Naive thymus-derived CD4-positive, alpha-beta T cell (primary cell): ENCODE measurements at regions of chr3 and their contacts with region 1.

Region 1: GRCh38 chr3:71064288-71064955 is 519.1 kb downstream of the FOXP1 start:
- DNase-seq: peak in 8 of 9 donors; percentile 35 to 86 (median 84)
- ATAC-seq: peak; percentile 64
- H3K4me3 ChIP-seq: peak overlapping the region; percentile 74
- H3K4me3 Mint-ChIP-seq: no peak overlapping the region
- H3K27ac ChIP-seq: peak overlapping the region; percentile 82
- H3K27ac Mint-ChIP-seq: no peak overlapping the region
- H3K4me1 ChIP-seq: peaks cover 55 to 64% of the 10 kb centered on the region in 2 donors
- H3K4me1 Mint-ChIP-seq: peaks cover 47 to 69% (median 67%) of the 10 kb centered on the region in 7 donors
- H3K27me3 ChIP-seq: no peaks in the 10 kb centered on the region
- H3K27me3 Mint-ChIP-seq: no peaks in the 10 kb centered on the region

Region 2: DNA sequence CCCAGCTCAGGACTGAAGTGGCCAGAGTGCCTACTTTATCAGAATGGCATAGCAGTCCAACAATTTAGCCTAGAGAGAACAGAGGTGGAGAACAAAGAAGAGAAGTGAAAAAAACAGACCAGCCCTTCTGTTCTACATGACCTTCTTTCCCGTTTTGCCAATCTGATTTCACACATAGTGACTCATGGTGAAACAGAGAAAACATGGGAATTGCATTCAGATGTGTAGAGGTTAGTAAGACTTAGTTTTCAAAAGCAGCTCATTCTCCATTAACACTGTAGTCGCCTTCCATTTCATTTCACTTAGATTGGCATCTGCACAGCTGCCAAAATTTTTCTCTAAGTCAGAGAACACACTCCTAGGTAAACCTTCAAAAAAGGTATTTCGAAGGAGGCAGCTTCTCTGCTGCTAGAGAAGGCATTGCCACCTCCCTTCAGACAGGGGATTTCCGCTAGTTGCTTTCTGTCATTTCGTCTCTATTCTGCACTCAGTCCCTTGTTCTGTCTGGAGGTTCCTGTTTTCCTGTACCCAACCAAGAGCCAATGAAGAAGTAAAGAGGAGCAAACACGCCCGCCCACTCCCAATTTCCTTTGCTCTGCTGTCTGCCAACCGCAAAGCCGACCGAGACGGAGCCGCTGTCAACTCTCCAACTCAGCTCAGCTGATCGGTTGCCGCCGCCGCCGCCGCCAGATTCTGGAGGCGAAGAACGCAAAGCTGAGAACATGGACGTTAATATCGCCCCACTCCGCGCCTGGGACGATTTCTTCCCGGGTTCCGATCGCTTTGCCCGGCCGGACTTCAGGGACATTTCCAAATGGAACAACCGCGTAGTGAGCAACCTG is 1979.9 kb before region 1 on chr3 and contains the start of gene ARL6IP5:
- CTCF ChIA-PET with region 1: no interaction called
- POLR2A ChIA-PET with region 1: no interaction called
- intact Hi-C with region 1: loop called in 1 of 2 experiments (anchors 10 kb)
- DNase-seq: peak; percentile 71 to 95 (median 93)
- ATAC-seq: peak; percentile 84
- H3K4me3 ChIP-seq: peak within 1 kb of the TSS; percentile 89
- H3K4me3 Mint-ChIP-seq: peak within 1 kb of the TSS; percentile 88 to 99 (median 97)
- H3K27ac ChIP-seq: peak within 1 kb of the TSS; percentile 76
- H3K27ac Mint-ChIP-seq: peak within 1 kb of the TSS; percentile 92 to 99 (median 98)
- H3K4me1 ChIP-seq: peaks cover 58% of the 10 kb centered on the region in 2 donors
- H3K4me1 Mint-ChIP-seq: peaks cover 44 to 72% (median 62%) of the 10 kb centered on the region in 7 donors
- H3K27me3 ChIP-seq: no peaks in the 10 kb centered on the region
- H3K27me3 Mint-ChIP-seq: no peaks in the 10 kb centered on the region
- total RNA-seq, gene ARL6IP5: 75.8 to 226 (median 119) TPM

Region 3: GRCh38 chr3:71022551-71023335 is 41.7 kb before region 1 on chr3:
- CTCF ChIA-PET with region 1: no interaction called
- POLR2A ChIA-PET with region 1: interaction called, 3 read pairs
- intact Hi-C with region 1: loop called in 1 of 2 experiments (anchors 5 kb)
- DNase-seq: no peak
- ATAC-seq: no peak
- H3K4me3 ChIP-seq: no peak overlapping the region
- H3K4me3 Mint-ChIP-seq: peak overlapping the region in 2 of 10 donors; percentile 6 to 32
- H3K27ac ChIP-seq: no peak overlapping the region
- H3K27ac Mint-ChIP-seq: peak overlapping the region in 8 of 9 donors; percentile 12 to 85 (median 72)
- H3K4me1 ChIP-seq: peaks cover 0 to 43% of the 10 kb centered on the region in 2 donors
- H3K4me1 Mint-ChIP-seq: peaks cover 37 to 94% (median 85%) of the 10 kb centered on the region in 7 donors
- H3K27me3 ChIP-seq: no peaks in the 10 kb centered on the region
- H3K27me3 Mint-ChIP-seq: no peaks in the 10 kb centered on the region

Region 4: GRCh38 chr3:71050538-71051258 is 13.7 kb before region 1 on chr3:
- CTCF ChIA-PET with region 1: interaction called, 4 read pairs
- POLR2A ChIA-PET with region 1: interaction called, 48 read pairs
- intact Hi-C with region 1: loop called (anchors 1 kb)
- DNase-seq: peak in 7 of 9 donors; percentile 52 to 82 (median 75)
- ATAC-seq: peak; percentile 97
- H3K4me3 ChIP-seq: no peak overlapping the region
- H3K4me3 Mint-ChIP-seq: peak overlapping the region in 8 of 10 donors; percentile 45 to 83 (median 64)
- H3K27ac ChIP-seq: peak overlapping the region; percentile 71
- H3K27ac Mint-ChIP-seq: peak overlapping the region in 6 of 9 donors; percentile 78 to 99 (median 95)
- H3K4me1 ChIP-seq: peaks cover 24 to 98% of the 10 kb centered on the region in 2 donors
- H3K4me1 Mint-ChIP-seq: peaks cover 73 to 100% (median 100%) of the 10 kb centered on the region in 7 donors
- H3K27me3 ChIP-seq: no peaks in the 10 kb centered on the region
- H3K27me3 Mint-ChIP-seq: no peaks in the 10 kb centered on the region

Region 5: DNA sequence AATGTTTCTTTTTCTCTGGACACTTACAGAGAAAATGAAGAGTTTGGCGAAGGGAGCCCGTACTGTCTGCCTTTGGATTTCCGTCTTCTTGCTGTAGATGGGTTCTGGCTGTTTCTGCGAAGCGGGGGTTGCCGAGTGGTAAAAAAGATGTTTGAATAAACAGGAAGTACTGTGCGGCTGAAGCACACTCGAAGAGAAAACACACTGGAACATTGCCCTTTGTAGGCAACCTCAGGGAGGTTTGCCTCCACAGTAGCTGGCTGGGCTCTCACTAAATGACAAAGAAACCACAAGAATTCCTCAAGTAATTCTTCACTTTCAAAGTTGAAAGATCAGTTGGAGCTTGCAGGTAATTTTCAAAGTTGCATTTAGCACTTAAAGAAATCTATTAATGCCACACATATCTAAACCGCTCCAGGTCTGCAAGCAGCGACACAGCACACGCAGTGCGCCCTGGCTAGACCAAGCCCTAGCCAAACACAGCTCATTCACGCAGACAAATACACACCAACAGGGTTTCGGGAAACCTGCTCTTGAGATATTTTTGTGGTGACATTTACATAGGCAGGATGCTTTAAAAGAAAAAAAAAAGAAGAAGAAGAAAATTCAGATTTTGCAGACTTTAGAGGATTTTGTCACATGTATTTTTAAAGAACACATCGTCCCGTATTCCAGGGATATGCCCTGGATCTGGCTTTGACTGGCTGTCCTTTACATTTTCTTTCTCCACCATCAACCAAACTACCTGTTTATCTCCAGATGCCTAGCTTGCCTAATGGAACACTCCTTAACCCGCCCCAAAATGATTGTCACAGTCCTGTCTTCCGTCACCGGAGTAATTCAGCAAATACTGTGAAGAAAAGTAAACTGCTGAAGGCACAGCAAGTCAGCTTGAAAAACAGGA is 66.3 kb after region 1 on chr3:
- CTCF ChIA-PET with region 1: interaction called, 8 read pairs
- POLR2A ChIA-PET with region 1: interaction called, 34 read pairs
- intact Hi-C with region 1: loop called (anchors 1 kb)
- DNase-seq: peak; percentile 33 to 90 (median 85)
- ATAC-seq: peak; percentile 86
- H3K4me3 ChIP-seq: peak overlapping the region; percentile 71
- H3K4me3 Mint-ChIP-seq: peak overlapping the region; percentile 85 to 99 (median 93)
- H3K27ac ChIP-seq: peak overlapping the region; percentile 89
- H3K27ac Mint-ChIP-seq: peak overlapping the region; percentile 94 to 99 (median 97)
- H3K4me1 ChIP-seq: peaks cover 42 to 51% of the 10 kb centered on the region in 2 donors
- H3K4me1 Mint-ChIP-seq: peaks cover 49 to 85% (median 80%) of the 10 kb centered on the region in 7 donors
- H3K27me3 ChIP-seq: no peaks in the 10 kb centered on the region
- H3K27me3 Mint-ChIP-seq: no peaks in the 10 kb centered on the region

Region 6: GRCh38 chr3:71369701-71370391 is 305.4 kb after region 1 on chr3:
- CTCF ChIA-PET with region 1: no interaction called
- POLR2A ChIA-PET with region 1: no interaction called
- intact Hi-C with region 1: loop called in 1 of 2 experiments (anchors 2 kb)
- DNase-seq: no peak
- ATAC-seq: no peak
- H3K4me3 ChIP-seq: no peak overlapping the region
- H3K4me3 Mint-ChIP-seq: peak overlapping the region in 2 of 10 donors; percentile 12 to 73
- H3K27ac ChIP-seq: peak overlapping the region; percentile 88
- H3K27ac Mint-ChIP-seq: peak overlapping the region in 8 of 9 donors; percentile 88 to 100 (median 96)
- H3K4me1 ChIP-seq: peaks cover 19 to 78% of the 10 kb centered on the region in 2 donors
- H3K4me1 Mint-ChIP-seq: peaks cover 10 to 94% (median 89%) of the 10 kb centered on the region in 7 donors
- H3K27me3 ChIP-seq: no peaks in the 10 kb centered on the region
- H3K27me3 Mint-ChIP-seq: peaks cover 0 to 39% (median 0%) of the 10 kb centered on the region in 5 donors

Region 7: GRCh38 chr3:71495708-71496472 is 431.5 kb after region 1 on chr3:
- CTCF ChIA-PET with region 1: no interaction called
- POLR2A ChIA-PET with region 1: interaction called, 5 read pairs
- intact Hi-C with region 1: loop called (anchors 2 kb)
- DNase-seq: peak in 2 of 9 donors; percentile 24 to 34
- ATAC-seq: no peak
- H3K4me3 ChIP-seq: peak overlapping the region; percentile 33
- H3K4me3 Mint-ChIP-seq: peak overlapping the region; percentile 52 to 98 (median 80)
- H3K27ac ChIP-seq: peak overlapping the region; percentile 89
- H3K27ac Mint-ChIP-seq: peak overlapping the region; percentile 77 to 100 (median 98)
- H3K4me1 ChIP-seq: peaks cover 43 to 71% of the 10 kb centered on the region in 2 donors
- H3K4me1 Mint-ChIP-seq: peaks cover 54 to 90% (median 85%) of the 10 kb centered on the region in 7 donors
- H3K27me3 ChIP-seq: no peaks in the 10 kb centered on the region
- H3K27me3 Mint-ChIP-seq: no peaks in the 10 kb centered on the region